Activated CD4-positive, alpha-beta T cell treated with anti-CD3 and anti-CD28 coated beads, Interleukin-2, amount 10 ng/mL, durations not matched to agents 24 days and 14 days (primary cell): ENCODE measurements at regions of chr18 and their contacts with region 1.

Region 1: GRCh38 chr18:47930931-47931717 is 665 bp upstream of the SMAD2 start:
- DNase-seq: peak; percentile 98
- H3K4me3 Mint-ChIP-seq: peak overlapping the region; percentile 86
- H3K27ac Mint-ChIP-seq: peak overlapping the region; percentile 91
- H3K4me1 Mint-ChIP-seq: peaks cover 38% of the 10 kb centered on the region
- H3K27me3 Mint-ChIP-seq: peaks cover 11% of the 10 kb centered on the region

Region 2: GRCh38 chr18:47772374-47773248 is 158.5 kb before region 1 on chr18:
- intact Hi-C with region 1: loop called (anchors 2 kb)
- DNase-seq: peak; percentile 91
- H3K4me3 Mint-ChIP-seq: no peak overlapping the region
- H3K27ac Mint-ChIP-seq: no peak overlapping the region
- H3K4me1 Mint-ChIP-seq: peaks cover 5% of the 10 kb centered on the region
- H3K27me3 Mint-ChIP-seq: peaks cover 5% of the 10 kb centered on the region

Region 3: GRCh38 chr18:47912343-47912742 is 18.8 kb before region 1 on chr18:
- intact Hi-C with region 1: loop called (anchors 1 kb)
- DNase-seq: peak; percentile 58
- H3K4me3 Mint-ChIP-seq: peak overlapping the region; percentile 64
- H3K27ac Mint-ChIP-seq: peak overlapping the region; percentile 93
- H3K4me1 Mint-ChIP-seq: peaks cover 65% of the 10 kb centered on the region
- H3K27me3 Mint-ChIP-seq: no peaks in the 10 kb centered on the region

Region 4: GRCh38 chr18:47944972-47945843 is 14.1 kb after region 1 on chr18:
- intact Hi-C with region 1: loop called (anchors 2 kb)
- DNase-seq: no peak
- H3K4me3 Mint-ChIP-seq: no peak overlapping the region
- H3K27ac Mint-ChIP-seq: peak overlapping the region; percentile 23
- H3K4me1 Mint-ChIP-seq: peaks cover 14% of the 10 kb centered on the region
- H3K27me3 Mint-ChIP-seq: peaks cover 23% of the 10 kb centered on the region

Region 5: DNA sequence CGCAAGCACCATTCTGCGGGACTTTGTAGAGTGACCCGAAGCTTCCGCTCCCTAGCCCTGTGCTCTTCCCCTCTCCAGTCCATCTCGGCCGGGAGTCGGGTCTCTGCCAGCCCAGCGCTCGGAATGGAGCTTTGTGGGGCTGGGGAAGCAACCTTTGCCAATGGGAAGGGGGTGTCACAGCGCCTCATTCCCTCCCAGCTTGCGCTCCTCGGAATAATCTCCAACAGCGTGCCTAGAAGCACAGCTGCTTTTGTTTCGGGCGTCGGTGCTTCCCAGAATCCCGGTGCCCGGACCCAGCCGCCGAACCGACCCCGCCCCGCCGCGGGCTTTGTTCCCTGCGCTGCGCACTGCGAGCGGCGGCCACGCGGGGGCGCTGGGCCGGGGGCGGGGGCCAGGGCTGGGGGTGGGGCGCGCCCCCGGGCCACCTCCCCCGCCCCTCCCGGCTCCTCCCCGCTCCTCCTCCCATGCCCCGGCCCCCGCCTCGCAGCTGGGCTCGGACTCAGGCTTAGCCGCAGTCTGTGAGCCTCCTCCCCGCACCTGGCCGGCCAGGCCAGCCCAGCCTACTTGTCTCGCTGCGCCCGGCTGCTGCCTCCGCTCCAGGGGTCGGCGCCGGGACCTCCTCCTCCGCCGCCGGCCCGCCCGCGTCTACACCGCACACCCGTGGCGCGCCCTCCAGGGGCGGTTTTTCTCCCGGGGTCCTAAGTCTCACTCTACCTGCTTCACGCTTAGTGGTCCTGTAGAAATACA is 77.0 kb after region 1 on chr18:
- intact Hi-C with region 1: loop called (anchors 1 kb)
- DNase-seq: peak; percentile 81
- H3K4me3 Mint-ChIP-seq: peak overlapping the region; percentile 55
- H3K27ac Mint-ChIP-seq: no peak overlapping the region
- H3K4me1 Mint-ChIP-seq: peaks cover 3% of the 10 kb centered on the region
- H3K27me3 Mint-ChIP-seq: peaks cover 38% of the 10 kb centered on the region

Region 6: DNA sequence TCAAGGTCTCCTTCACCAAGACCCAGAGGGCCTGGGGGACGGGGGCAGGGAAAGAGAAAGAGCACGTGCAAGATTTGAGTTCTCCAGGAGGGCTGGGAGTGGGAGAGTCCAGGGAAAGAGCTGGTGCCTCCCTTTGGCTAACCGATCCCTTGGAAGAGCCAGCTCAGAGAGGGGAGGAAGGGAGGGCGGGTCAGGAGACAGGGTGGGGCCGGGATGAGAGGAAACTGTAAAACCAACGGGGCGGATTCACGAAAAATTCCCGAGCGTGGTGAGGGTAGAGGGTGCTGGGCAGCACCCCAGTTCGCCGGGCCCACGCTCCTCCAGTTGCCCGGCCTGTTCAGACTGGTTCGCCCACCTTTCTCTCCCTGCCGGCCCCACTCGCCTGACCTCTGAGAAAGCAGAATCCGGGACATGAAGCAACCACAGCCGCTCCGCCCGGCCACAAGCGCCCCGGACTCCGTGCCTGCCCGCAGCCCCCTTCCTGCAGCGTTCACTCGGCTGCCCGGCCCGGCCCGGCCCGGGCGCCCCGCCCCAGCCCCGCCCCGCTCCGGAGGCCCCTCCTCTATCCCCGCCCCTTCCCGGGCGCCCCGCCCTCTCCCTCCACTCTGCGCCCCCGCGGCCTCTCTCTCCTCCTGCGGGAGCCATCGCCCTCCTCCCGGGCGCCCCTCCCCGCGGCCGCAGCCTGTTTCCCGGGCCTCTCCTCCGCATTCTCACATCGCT is 230.2 kb after region 1 on chr18:
- intact Hi-C with region 1: loop called (anchors 10 kb)
- DNase-seq: peak; percentile 89
- H3K4me3 Mint-ChIP-seq: peak overlapping the region; percentile 75
- H3K27ac Mint-ChIP-seq: peak overlapping the region; percentile 60
- H3K4me1 Mint-ChIP-seq: peaks cover 8% of the 10 kb centered on the region
- H3K27me3 Mint-ChIP-seq: peaks cover 45% of the 10 kb centered on the region

Region 7: GRCh38 chr18:48600456-48601090 is 669.4 kb after region 1 on chr18:
- intact Hi-C with region 1: no loop called
- DNase-seq: no peak
- H3K4me3 Mint-ChIP-seq: no peak overlapping the region
- H3K27ac Mint-ChIP-seq: no peak overlapping the region
- H3K4me1 Mint-ChIP-seq: no peaks in the 10 kb centered on the region
- H3K27me3 Mint-ChIP-seq: no peaks in the 10 kb centered on the region